PC-9 (cell line): ENCODE measurements at regions of chr1 and their contacts with region 1.

Region 1: GRCh38 chr1:110780600-110781484 is 92.1 kb upstream of the CD53 start:
- DNase-seq: peak; percentile 59 to 64
- H3K4me3 ChIP-seq: no peak overlapping the region
- H3K27ac ChIP-seq: no peak overlapping the region
- H3K4me1 ChIP-seq: no peaks in the 10 kb centered on the region
- H3K27me3 ChIP-seq: peaks cover 4% of the 10 kb centered on the region; the same call in 1 of the 2 replicates
- CTCF ChIP-seq: peak; percentile 94

Region 2: GRCh38 chr1:110053557-110054428 is 727.0 kb before region 1 on chr1:
- CTCF ChIA-PET with region 1: no interaction called
- POLR2A ChIA-PET with region 1: no interaction called
- intact Hi-C with region 1: loop called (anchors 5 kb)
- DNase-seq: peak in 1 of 2 experiments; percentile 58
- H3K4me3 ChIP-seq: no peak overlapping the region
- H3K27ac ChIP-seq: no peak overlapping the region
- H3K4me1 ChIP-seq: peaks cover 16% of the 10 kb centered on the region; the same call in 1 of the 2 replicates
- H3K27me3 ChIP-seq: no peaks in the 10 kb centered on the region
- CTCF ChIP-seq: peak; percentile 99

Region 3: DNA sequence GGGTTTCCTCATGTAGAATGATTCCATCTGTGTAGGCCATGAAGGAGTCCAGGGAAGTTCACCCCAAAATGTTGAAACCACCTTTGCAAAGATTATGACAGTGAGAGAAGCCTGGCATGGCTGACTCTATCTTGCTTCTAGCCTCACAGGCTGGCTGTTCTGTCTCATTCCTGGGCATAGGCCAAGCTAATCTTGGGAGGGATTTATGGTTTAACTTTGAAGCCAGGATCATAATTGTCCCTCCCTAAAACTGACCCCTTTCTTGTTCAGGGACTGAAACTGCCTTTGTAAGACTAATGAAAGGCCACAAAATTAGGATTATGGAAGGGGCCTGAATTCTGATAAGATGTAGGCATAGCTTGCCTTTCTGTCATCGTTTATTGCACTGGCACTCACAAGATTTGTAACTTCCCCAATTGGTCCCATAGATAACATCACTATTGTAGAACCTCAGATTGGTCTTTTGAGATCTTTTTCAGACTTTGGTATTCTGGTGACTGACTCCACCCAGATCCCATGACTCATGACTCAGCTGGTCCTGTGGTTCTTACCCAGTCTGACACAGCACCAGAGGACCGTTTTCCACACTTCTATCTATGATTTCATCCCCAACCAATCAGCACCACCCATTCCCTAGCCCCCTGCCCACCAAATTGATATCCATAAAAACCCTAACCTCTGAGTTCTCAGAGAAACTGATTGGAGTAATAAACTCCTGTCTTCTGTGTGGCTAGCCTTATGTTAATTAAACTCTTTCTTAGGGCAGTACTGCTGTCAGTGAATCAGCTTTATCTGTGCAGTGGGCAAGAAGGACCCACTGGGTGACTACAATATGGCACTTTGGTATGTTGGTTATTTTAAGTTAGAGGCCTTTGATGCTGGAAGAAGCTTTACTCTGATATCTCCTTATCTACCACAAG is 359.7 kb before region 1 on chr1:
- CTCF ChIA-PET with region 1: no interaction called
- POLR2A ChIA-PET with region 1: no interaction called
- intact Hi-C with region 1: loop called (anchors 5 kb)
- DNase-seq: no peak
- H3K4me3 ChIP-seq: no peak overlapping the region
- H3K27ac ChIP-seq: no peak overlapping the region
- H3K4me1 ChIP-seq: no peaks in the 10 kb centered on the region
- H3K27me3 ChIP-seq: no peaks in the 10 kb centered on the region
- CTCF ChIP-seq: no peak

Region 4: GRCh38 chr1:110619412-110620249 is 161.2 kb before region 1 on chr1:
- CTCF ChIA-PET with region 1: interaction called, 11 read pairs
- POLR2A ChIA-PET with region 1: no interaction called
- intact Hi-C with region 1: loop called (anchors 1 kb)
- DNase-seq: peak; percentile 60 to 82
- H3K4me3 ChIP-seq: no peak overlapping the region
- H3K27ac ChIP-seq: no peak overlapping the region
- H3K4me1 ChIP-seq: no peaks in the 10 kb centered on the region; the same call in 1 of the 2 replicates
- H3K27me3 ChIP-seq: peaks cover 40% of the 10 kb centered on the region; the same call in 1 of the 2 replicates
- CTCF ChIP-seq: peak; percentile 99

Region 5: GRCh38 chr1:110766025-110766647 is 14.7 kb before region 1 on chr1:
- CTCF ChIA-PET with region 1: no interaction called
- POLR2A ChIA-PET with region 1: no interaction called
- intact Hi-C with region 1: loop called (anchors 2 kb)
- DNase-seq: no peak
- H3K4me3 ChIP-seq: no peak overlapping the region
- H3K27ac ChIP-seq: no peak overlapping the region
- H3K4me1 ChIP-seq: peaks cover 14% of the 10 kb centered on the region
- H3K27me3 ChIP-seq: peaks cover 15% of the 10 kb centered on the region
- CTCF ChIP-seq: peak; percentile 90

Region 6: GRCh38 chr1:111334169-111334568 is 553.3 kb after region 1 on chr1:
- CTCF ChIA-PET with region 1: no interaction called
- POLR2A ChIA-PET with region 1: no interaction called
- intact Hi-C with region 1: loop called (anchors 5 kb)
- DNase-seq: peak; percentile 23 to 61
- H3K4me3 ChIP-seq: no peak overlapping the region
- H3K27ac ChIP-seq: no peak overlapping the region
- H3K4me1 ChIP-seq: no peaks in the 10 kb centered on the region
- H3K27me3 ChIP-seq: no peaks in the 10 kb centered on the region
- CTCF ChIP-seq: peak; percentile 97